ENCODE measurements at regions of chr6 and their contacts with region 1.

Region 1: GRCh38 chr6:16849280-16849987 is 88.2 kb upstream of the ATXN1 start:
- DNase-seq: peak; percentile 93
- ATAC-seq: peak; percentile 96
- H3K4me3 ChIP-seq: peak overlapping the region; percentile 40
- H3K27ac ChIP-seq: peak overlapping the region; percentile 88
- H3K4me1 ChIP-seq: peaks cover 28% of the 10 kb centered on the region
- H3K27me3 ChIP-seq: no peaks in the 10 kb centered on the region
- CTCF ChIP-seq: no peak

Region 2: DNA sequence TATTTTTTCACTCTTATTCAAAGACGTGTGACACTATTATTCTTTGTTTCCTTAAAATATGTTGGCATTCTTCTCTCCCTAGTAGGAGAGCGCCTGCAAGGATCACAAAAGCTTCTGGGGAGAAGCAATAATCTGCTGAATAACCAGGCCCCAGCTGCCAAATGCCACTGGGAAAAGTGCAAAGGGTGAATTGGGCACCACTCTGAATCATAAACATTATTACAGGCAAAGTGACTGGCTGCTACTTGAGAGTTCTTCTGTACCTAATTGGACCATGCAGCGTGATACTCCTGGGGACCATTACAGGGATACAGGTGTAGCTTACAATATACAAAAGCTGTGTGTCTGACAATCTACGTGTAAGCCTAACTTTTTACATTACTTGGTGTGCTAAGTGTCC is 241.0 kb before region 1 on chr6:
- CTCF ChIA-PET with region 1: no interaction called
- POLR2A ChIA-PET with region 1: no interaction called
- intact Hi-C with region 1: no loop called
- DNase-seq: no peak
- ATAC-seq: no peak
- H3K4me3 ChIP-seq: no peak overlapping the region
- H3K27ac ChIP-seq: no peak overlapping the region
- H3K4me1 ChIP-seq: no peaks in the 10 kb centered on the region
- H3K27me3 ChIP-seq: no peaks in the 10 kb centered on the region
- CTCF ChIP-seq: no peak

Region 3: DNA sequence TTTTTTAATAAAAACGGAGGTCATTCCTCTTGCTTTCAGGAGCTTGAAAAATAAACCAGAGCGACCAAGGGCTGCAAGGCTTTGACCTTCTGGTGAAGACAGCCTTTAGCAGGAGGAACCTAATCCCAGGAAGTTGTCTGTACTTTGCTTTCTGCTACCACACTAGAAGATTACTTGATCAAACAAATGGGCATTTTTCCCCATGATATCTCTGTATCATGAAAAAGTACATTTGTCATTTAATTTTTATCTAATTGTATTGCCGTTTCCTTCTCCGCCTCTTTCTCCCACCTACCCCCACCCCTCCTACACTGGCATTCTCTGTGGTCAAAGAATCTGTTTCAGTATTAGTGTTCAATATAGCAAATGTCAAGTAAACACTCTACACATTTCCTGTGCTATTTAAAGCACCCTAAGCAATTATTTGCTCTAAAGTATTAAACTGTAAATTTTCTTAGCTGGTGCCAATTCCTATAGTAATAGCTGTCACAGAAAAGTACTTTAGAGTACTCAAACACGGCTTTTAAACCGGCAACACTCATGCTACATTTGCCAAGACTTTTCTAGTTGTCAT is 117.9 kb before region 1 on chr6:
- CTCF ChIA-PET with region 1: no interaction called
- POLR2A ChIA-PET with region 1: no interaction called
- intact Hi-C with region 1: no loop called
- DNase-seq: peak; percentile 30
- ATAC-seq: peak; percentile 51
- H3K4me3 ChIP-seq: no peak overlapping the region
- H3K27ac ChIP-seq: 0 out of 2 replicates have a peak overlapping the region, but pooled peaks have one; percentile 4
- H3K4me1 ChIP-seq: peaks cover 57% of the 10 kb centered on the region
- H3K27me3 ChIP-seq: no peaks in the 10 kb centered on the region
- CTCF ChIP-seq: no peak

Region 4: GRCh38 chr6:16769131-16769985 is 80.1 kb before region 1 on chr6:
- CTCF ChIA-PET with region 1: no interaction called
- POLR2A ChIA-PET with region 1: no interaction called
- intact Hi-C with region 1: loop called (anchors 1 kb)
- DNase-seq: peak; percentile 96
- ATAC-seq: peak; percentile 51
- H3K4me3 ChIP-seq: peak overlapping the region; percentile 38
- H3K27ac ChIP-seq: peak overlapping the region; percentile 86
- H3K4me1 ChIP-seq: peaks cover 63% of the 10 kb centered on the region
- H3K27me3 ChIP-seq: no peaks in the 10 kb centered on the region
- CTCF ChIP-seq: peak; percentile 23; the same call in 1 of the 2 replicates

Region 5: GRCh38 chr6:16872543-16873235 is 23.3 kb after region 1 on chr6:
- CTCF ChIA-PET with region 1: interaction called, 14 read pairs
- POLR2A ChIA-PET with region 1: interaction called, 3 read pairs
- intact Hi-C with region 1: no loop called
- DNase-seq: no peak
- ATAC-seq: peak; percentile 14; the same call in 1 of the 2 replicates
- H3K4me3 ChIP-seq: no peak overlapping the region
- H3K27ac ChIP-seq: no peak overlapping the region
- H3K4me1 ChIP-seq: peaks cover 16% of the 10 kb centered on the region
- H3K27me3 ChIP-seq: no peaks in the 10 kb centered on the region
- CTCF ChIP-seq: no peak; the same call in 1 of the 2 replicates

Region 6: DNA sequence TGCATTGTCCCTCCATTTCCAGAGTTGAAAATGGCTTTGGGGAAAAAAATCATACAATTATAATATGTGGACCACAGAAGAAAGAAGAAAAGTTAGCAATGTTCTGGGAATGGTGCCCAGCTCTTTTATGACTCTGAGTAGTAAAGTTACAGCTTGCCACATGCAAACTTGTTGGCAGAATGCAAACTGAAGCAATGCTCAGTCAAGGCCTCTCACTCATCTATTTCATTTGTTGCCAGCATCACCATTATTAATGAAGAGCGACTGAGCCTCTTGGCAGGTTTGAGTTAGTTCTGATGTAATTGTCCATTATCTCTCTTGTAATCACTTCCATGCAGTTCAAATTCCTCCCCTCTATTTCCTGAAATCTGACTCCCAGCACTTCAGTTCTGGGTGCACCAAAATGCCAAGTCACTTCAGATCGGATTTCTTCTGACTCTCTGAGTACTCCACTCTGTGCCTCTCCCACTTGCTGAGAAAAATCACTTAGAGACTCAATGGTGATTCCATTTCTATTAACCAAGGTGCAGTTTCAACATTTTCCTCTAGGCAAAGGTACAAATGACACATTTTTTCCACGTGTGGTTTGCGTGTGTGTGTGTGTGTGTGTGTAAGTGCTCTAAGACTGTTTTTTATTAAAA is 98.1 kb after region 1 on chr6:
- CTCF ChIA-PET with region 1: no interaction called
- POLR2A ChIA-PET with region 1: interaction called, 3 read pairs
- intact Hi-C with region 1: loop called (anchors 5 kb)
- DNase-seq: peak; percentile 86
- ATAC-seq: peak; percentile 96
- H3K4me3 ChIP-seq: peak overlapping the region; percentile 20; the same call in 1 of the 2 replicates
- H3K27ac ChIP-seq: peak overlapping the region; percentile 90
- H3K4me1 ChIP-seq: peaks cover 22% of the 10 kb centered on the region
- H3K27me3 ChIP-seq: no peaks in the 10 kb centered on the region
- CTCF ChIP-seq: no peak